Activated CD4-positive, alpha-beta T cell treated with anti-CD3 and anti-CD28 coated beads for 36 hours (primary cell): ENCODE measurements at regions of chr1 and their contacts with region 1.

Region 1: DNA sequence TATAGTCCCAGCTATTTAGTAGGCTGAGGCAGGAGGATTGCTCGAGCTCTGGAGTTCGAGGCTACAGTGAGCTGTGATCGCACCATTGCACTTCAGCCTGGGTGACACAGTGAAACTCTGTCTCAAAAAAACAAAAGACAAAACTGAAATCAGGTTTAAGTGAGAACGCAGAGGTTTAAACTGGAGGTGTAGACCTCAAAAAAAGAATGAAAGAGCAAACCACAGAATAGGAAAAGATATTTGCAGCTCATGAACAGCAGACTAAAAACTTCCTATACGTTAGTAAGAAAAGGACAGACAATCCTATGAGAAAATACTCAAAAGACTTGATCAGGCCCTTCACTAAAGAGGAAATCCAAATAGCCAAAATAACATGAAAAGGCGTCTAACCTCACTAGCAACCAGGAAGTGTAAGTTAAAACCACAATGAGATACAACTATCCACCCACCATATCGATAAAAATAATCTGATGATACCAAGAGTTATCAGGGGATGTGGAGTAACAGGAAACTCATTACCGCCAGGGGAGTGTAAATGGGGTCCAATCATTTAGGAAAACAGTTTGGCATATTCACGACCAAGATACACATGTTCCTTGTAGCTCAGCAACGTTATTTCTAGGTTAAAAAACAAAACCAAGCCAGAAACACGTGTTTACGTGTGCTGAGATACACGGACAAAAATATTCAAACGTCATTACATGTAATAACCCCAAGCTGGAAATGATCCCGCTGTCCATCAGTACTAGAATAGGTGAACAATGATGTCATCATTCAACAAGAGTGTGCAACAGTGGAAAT is 9.8 kb downstream of the TNFRSF9 start:
- DNase-seq: peak; percentile 45
- ATAC-seq: peak; percentile 81
- H3K4me3 Mint-ChIP-seq: peak overlapping the region; percentile 11
- H3K27ac Mint-ChIP-seq: peak overlapping the region; percentile 87
- H3K4me1 Mint-ChIP-seq: peaks cover 27% of the 10 kb centered on the region
- H3K27me3 Mint-ChIP-seq: peaks cover 2% of the 10 kb centered on the region

Region 2: GRCh38 chr1:7942214-7942921 is 11.5 kb after region 1 on chr1:
- CTCF ChIA-PET with region 1: interaction called, 6 read pairs
- POLR2A ChIA-PET with region 1: no interaction called
- intact Hi-C with region 1: loop called in 1 of 2 experiments (anchors 1 kb)
- DNase-seq: peak; percentile 57
- ATAC-seq: peak; percentile 25
- H3K4me3 Mint-ChIP-seq: peak overlapping the region; percentile 66
- H3K27ac Mint-ChIP-seq: peak overlapping the region; percentile 73
- H3K4me1 Mint-ChIP-seq: peaks cover 47% of the 10 kb centered on the region
- H3K27me3 Mint-ChIP-seq: peaks cover 28% of the 10 kb centered on the region

Region 3: GRCh38 chr1:7948960-7949359 is 18.1 kb after region 1 on chr1:
- CTCF ChIA-PET with region 1: interaction called, 3 read pairs
- POLR2A ChIA-PET with region 1: no interaction called
- intact Hi-C with region 1: loop called (anchors 1 to 2 kb)
- DNase-seq: peak; percentile 50
- ATAC-seq: peak; percentile 92
- H3K4me3 Mint-ChIP-seq: peak overlapping the region; percentile 42
- H3K27ac Mint-ChIP-seq: peak overlapping the region; percentile 80
- H3K4me1 Mint-ChIP-seq: peaks cover 30% of the 10 kb centered on the region
- H3K27me3 Mint-ChIP-seq: no peaks in the 10 kb centered on the region

Region 4: DNA sequence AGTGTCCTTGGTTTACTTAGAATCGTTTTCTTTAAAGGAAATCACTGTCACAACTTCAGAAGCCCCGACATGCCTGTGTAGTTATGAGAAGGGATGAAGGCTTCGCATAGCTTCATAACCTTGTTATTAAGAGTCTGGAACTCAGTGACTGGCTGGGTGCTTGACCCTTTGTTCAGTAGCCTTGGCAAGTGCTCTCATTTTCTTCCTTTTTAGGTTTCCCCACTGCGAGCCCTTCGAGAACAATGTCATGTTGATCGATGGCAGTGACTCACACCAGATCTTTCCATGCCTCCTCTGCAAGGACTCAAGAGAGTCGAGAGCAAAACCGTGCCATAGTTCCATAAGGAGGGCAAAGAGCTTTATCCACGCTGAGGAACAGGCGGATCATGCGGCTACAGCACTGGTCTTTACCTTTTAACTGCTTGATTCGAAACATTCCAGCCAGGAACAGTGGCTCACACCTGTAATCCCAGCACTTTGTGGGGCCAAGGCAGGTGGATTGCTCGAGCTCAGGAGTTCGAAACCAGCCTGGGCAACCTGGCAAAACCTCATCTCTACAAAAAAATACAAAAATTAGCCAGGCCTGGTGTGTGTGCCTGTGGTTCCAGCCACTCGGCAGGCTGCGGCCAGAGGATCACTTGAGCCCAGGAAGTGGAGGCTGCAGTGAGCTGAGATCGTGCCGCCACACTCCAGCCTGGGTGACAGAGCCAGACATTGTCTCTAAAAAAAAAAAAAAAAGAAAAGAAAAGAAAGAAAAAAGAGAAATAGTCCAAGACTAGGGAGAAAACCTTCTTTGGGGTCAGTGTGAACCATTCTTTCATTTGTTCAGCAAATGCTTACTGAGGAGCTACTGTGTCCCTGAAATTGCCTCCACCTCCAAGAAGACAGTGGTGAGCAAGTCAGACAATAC is 190.7 kb after region 1 on chr1:
- CTCF ChIA-PET with region 1: no interaction called
- POLR2A ChIA-PET with region 1: no interaction called
- intact Hi-C with region 1: no loop called
- DNase-seq: no peak
- ATAC-seq: peak; percentile 39
- H3K4me3 Mint-ChIP-seq: no peak overlapping the region
- H3K27ac Mint-ChIP-seq: no peak overlapping the region
- H3K4me1 Mint-ChIP-seq: peaks cover 10% of the 10 kb centered on the region
- H3K27me3 Mint-ChIP-seq: peaks cover 6% of the 10 kb centered on the region